ENCODE measurements at regions of chr16 and their contacts with region 1.

Region 1: DNA sequence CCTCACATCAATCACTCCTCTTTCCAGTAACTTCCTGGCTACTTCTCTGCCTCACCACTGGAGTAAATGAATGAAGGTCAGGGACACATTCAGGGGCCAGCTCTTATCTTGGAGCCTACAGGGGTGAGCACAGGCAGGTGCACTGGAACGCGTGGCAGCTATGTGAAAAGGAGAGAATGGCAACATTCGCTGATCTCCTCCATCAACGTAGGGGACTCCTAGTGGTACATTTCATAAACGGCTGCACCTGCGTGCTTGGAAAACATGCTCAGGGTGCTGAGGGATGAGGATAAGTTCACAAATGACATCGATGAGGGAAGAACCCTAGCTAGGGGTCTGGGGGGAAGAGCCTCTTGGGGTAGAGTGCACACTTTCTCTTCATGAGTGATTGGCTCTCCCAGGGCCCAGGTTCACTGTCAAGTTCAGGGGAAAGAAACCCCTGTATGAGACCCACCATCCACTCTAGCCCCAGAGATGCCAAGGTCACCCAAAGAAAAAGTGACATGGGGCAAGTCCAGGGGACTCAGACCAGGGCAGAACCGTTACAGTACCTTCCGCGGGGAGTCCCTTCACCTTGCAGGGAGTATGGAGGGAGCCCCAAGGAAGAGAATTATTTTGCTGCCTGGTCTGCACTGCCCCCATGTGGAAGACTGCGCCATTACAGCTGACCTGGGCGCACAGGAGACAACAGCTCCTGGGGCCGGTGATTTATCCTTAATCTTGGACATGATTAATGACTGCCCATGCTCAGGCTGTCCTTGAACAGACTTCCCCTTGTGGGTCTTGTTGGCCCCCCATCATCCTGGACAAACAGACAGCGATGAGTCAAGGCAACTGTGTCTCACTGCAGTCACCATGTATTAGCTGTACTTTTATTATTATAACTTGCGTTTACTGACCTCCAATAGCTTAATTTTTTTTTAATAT is 30.1 kb downstream of the VAC14 start:
- DNase-seq: peak; percentile 47
- H3K4me3 ChIP-seq: no peak overlapping the region
- H3K27ac ChIP-seq: no peak overlapping the region
- H3K4me1 ChIP-seq: peaks cover 19% of the 10 kb centered on the region
- H3K27me3 ChIP-seq: no peaks in the 10 kb centered on the region
- CTCF ChIP-seq: peak; percentile 96 to 97

Region 2: GRCh38 chr16:70395345-70395901 is 375.5 kb before region 1 on chr16:
- CTCF ChIA-PET with region 1: no interaction called
- dilution Hi-C with region 1: no loop called
- in situ Hi-C with region 1: no loop called
- intact Hi-C with region 1: loop called (anchors 10 kb)
- DNase-seq: peak; percentile 21
- H3K4me3 ChIP-seq: no peak overlapping the region
- H3K27ac ChIP-seq: no peak overlapping the region
- H3K4me1 ChIP-seq: peaks cover 19% of the 10 kb centered on the region
- H3K27me3 ChIP-seq: no peaks in the 10 kb centered on the region
- CTCF ChIP-seq: peak; percentile 63 to 78

Region 3: GRCh38 chr16:70529051-70529777 is 241.7 kb before region 1 on chr16:
- CTCF ChIA-PET with region 1: no interaction called
- dilution Hi-C with region 1: no loop called
- in situ Hi-C with region 1: loop called in 1 of 2 experiments (anchors 25 kb)
- intact Hi-C with region 1: loop called (anchors 10 kb)
- DNase-seq: peak; percentile 55
- H3K4me3 ChIP-seq: no peak overlapping the region
- H3K27ac ChIP-seq: peak overlapping the region; percentile 18
- H3K4me1 ChIP-seq: peaks cover 32% of the 10 kb centered on the region
- H3K27me3 ChIP-seq: no peaks in the 10 kb centered on the region
- CTCF ChIP-seq: peak; percentile 54 to 59

Region 4: DNA sequence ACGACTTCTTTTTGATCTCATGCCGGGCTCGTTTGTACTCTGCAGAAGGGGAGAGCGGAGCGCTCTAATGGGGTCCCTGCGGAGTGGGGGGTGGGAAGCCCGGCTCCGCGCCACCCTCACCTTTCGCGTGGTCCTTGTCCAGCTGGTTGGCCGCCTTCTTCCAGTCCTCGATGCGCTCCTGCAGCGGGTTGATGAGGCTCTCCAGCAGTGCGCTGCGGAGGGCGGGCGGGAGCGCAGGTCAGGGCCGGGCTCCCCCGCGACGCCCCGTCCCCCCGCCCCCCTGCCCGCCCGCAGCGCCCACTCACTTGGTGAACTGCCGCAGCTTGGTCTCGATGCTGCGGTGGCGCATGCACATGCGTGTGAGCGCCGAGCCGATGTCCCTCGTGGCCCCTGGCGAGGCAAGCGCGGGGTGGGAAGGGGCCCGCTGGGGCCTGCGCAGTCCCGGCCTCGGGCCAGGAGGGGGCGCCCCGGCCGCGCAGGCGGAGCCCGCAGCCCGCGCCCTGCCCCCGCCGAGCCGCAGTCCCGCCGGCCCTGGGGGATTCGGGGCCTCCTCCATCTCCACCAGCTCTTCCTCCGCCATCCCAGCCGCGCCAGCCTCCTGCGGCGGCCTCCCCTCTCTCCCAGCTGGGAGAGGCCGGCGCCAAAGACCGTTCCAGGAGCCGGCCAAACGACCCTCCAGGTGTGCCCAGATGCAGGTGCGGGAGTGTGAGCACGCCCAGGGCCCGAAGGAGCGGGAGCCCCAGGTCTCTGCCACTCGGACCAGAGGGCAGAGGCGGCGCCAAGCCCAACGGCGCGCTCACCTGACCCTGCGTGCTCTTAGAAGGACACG is 91.0 kb before region 1 on chr16:
- CTCF ChIA-PET with region 1: interaction called, 3 read pairs
- dilution Hi-C with region 1: no loop called
- in situ Hi-C with region 1: loop called (anchors 10 kb)
- intact Hi-C with region 1: loop called (anchors 2 kb)
- DNase-seq: no peak
- H3K4me3 ChIP-seq: no peak overlapping the region
- H3K27ac ChIP-seq: no peak overlapping the region
- H3K4me1 ChIP-seq: peaks cover 46% of the 10 kb centered on the region
- H3K27me3 ChIP-seq: no peaks in the 10 kb centered on the region
- CTCF ChIP-seq: peak; percentile 23 to 41

Region 5: GRCh38 chr16:70715055-70715858 is 55.6 kb before region 1 on chr16:
- CTCF ChIA-PET with region 1: interaction called, 18 read pairs
- dilution Hi-C with region 1: loop called (anchors 5 kb)
- in situ Hi-C with region 1: no loop called
- intact Hi-C with region 1: no loop called
- DNase-seq: peak; percentile 99
- H3K4me3 ChIP-seq: no peak overlapping the region
- H3K27ac ChIP-seq: peak overlapping the region; percentile 67
- H3K4me1 ChIP-seq: peaks cover 34% of the 10 kb centered on the region
- H3K27me3 ChIP-seq: no peaks in the 10 kb centered on the region
- CTCF ChIP-seq: peak in 1 of 2 donors; percentile 43

Measured in mammary epithelial cell (primary cell).